Right ventricle myocardium inferior (tissue), 1 donor: ENCODE measurements at regions of chr5 and their contacts with region 1.

Region 1: GRCh38 chr5:59999056-59999455 is 105.5 kb upstream of the PDE4D start:
- DNase-seq: no peak
- ATAC-seq: no peak

Region 2: GRCh38 chr5:59956130-59956783 is 42.8 kb before region 1 on chr5:
- intact Hi-C with region 1: loop called (anchors 1 kb)
- DNase-seq: no peak
- ATAC-seq: no peak